Dorsolateral prefrontal cortex (tissue), 120 donors: ENCODE measurements at regions of chr6 and their contacts with region 1.

Region 1: GRCh38 chr6:17584241-17584803 is 15.8 kb upstream of the FAM8A1 start:
- DNase-seq: peak in 2 of 10 donors; percentile 42 to 44
- H3K4me3 ChIP-seq: peak overlapping the region in 50 of 59 donors; percentile 4 to 58 (median 40)
- H3K27ac ChIP-seq: peak overlapping the region in 57 of 59 donors; percentile 16 to 94 (median 81)
- H3K27me3 ChIP-seq: no peaks in the 10 kb centered on the region
- CTCF ChIP-seq: peak; percentile 78 to 100 (median 95)

Region 2: DNA sequence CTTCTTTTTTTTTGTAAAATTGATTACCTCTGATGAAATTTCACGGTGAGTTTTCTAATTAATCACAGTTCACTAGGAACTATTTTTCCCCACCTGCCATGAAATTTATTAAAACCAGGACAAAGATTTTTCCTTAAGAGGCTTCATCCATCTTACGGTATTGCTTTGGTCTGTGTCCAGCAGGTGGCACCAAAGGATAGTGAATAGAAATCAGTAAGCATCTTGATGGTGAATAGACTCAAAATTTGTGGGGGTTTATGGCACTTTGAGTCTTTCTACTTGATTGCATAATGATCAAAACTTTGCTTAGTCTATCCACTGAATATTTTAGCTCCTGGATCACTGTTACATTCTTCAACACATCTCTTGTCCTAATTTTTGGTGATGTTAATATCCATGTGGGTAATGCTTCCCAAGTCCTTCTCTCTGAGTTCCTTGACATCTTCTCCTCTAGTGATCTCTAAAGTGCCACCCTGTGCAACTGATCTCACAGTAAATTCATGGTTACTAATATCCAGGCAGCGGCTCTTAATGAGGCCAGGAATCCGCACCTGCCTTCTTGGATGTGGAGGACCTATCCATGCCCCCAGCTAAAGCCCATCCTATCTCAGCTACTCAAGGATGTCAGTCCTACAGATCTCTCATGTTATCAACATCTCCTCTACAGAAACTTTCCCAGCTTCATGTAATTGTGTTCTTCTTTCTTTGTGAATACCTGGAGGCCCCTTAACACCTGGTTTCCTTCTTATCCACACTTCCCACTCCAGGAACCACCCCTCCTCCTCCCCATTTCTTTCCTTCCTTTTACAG is 428.0 kb before region 1 on chr6:
- intact Hi-C with region 1: loop called (anchors 2 to 5 kb)
- DNase-seq: peak in 7 of 10 donors; percentile 63 to 91 (median 69)
- H3K4me3 ChIP-seq: no peak overlapping the region
- H3K27ac ChIP-seq: no peak overlapping the region
- H3K27me3 ChIP-seq: no peaks in the 10 kb centered on the region
- CTCF ChIP-seq: peak; percentile 72 to 98 (median 90)

Region 3: GRCh38 chr6:17281100-17281494 is 303.2 kb before region 1 on chr6 and contains the start of gene RBM24:
- intact Hi-C with region 1: loop called in 1 of 2 experiments (anchors 10 kb)
- DNase-seq: peak; percentile 33 to 74 (median 50)
- H3K4me3 ChIP-seq: peak within 1 kb of the TSS; percentile 57 to 91 (median 81)
- H3K27ac ChIP-seq: peak within 1 kb of the TSS in 58 of 59 donors; percentile 26 to 93 (median 82)
- H3K27me3 ChIP-seq: no peaks in the 10 kb centered on the region
- CTCF ChIP-seq: peak in 8 of 56 donors; percentile 15 to 37 (median 23)
- total RNA-seq, gene RBM24: 3.6 to 19.5 (median 9.2) TPM

Region 4: GRCh38 chr6:17808609-17809008 is 224.3 kb after region 1 on chr6:
- intact Hi-C with region 1: loop called (anchors 5 to 10 kb)
- DNase-seq: no peak
- H3K4me3 ChIP-seq: no peak overlapping the region
- H3K27ac ChIP-seq: peak overlapping the region in 1 of 59 donors; percentile 5
- H3K27me3 ChIP-seq: no peaks in the 10 kb centered on the region
- CTCF ChIP-seq: no peak